G401 (cell line): ENCODE measurements at regions of chr14 and their contacts with region 1.

Region 1: GRCh38 chr14:71193663-71194062 is 286.4 kb downstream of the PCNX1 start:
- DNase-seq: no peak

Region 2: GRCh38 chr14:71267007-71267513 is 73.4 kb after region 1 on chr14:
- in situ Hi-C with region 1: loop called (anchors 10 kb)
- DNase-seq: no peak

Region 3: DNA sequence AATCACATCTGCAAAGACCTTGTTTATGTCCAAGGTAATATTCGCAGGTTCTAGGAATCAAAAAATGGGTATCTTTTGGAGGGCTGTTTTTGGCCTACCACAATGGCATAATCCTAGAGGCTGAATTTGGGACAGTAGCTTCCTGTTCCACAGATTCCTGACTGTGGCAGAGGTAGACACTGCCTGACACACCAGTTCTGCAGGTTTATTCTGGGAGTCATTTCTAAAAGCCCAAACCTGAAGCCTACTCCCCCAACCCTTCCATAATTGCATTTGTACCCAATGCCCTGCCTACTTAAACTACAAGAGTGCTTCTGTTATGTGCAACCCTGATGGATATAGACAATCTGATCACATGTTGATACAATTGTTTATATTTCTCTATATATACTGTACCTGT is 92.5 kb after region 1 on chr14:
- in situ Hi-C with region 1: no loop called
- DNase-seq: no peak